Colonic mucosa (tissue), 4 donors: ENCODE measurements at regions of chr12 and their contacts with region 1.

Region 1: DNA sequence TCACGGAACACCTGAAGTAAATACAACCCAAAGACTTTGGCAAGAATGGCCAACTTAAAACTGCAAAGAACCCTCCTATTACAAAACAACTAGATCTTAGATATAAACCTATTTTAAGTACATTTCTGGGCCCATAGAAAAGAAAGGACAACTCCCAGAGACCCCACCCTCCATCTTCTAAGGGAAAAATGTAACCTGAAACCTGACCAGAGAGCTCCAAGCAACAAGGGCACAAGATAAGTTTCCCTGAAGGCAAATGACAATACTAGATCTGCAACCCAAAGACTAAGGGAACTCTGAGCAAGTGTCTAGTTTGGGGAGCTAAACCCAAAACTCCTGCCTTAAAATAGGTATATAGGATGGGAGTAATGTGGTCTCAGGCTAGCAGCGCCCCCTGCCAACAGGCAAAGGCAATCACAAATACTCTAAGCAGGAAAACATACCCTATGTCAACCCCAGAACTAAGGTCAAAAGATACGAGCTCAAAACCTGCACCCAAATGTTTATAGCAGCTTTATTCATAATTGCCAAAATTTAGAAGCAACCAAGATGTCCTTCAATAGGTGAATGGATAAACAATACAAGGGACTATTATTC is 218.9 kb downstream of the ITPR2 start:
- DNase-seq: peak; percentile 25
- H3K4me3 ChIP-seq: no peak overlapping the region
- H3K27ac ChIP-seq: no peak overlapping the region
- H3K4me1 ChIP-seq: no peaks in the 10 kb centered on the region
- H3K27me3 ChIP-seq: no peaks in the 10 kb centered on the region
- CTCF ChIP-seq: peak; percentile 24

Region 2: DNA sequence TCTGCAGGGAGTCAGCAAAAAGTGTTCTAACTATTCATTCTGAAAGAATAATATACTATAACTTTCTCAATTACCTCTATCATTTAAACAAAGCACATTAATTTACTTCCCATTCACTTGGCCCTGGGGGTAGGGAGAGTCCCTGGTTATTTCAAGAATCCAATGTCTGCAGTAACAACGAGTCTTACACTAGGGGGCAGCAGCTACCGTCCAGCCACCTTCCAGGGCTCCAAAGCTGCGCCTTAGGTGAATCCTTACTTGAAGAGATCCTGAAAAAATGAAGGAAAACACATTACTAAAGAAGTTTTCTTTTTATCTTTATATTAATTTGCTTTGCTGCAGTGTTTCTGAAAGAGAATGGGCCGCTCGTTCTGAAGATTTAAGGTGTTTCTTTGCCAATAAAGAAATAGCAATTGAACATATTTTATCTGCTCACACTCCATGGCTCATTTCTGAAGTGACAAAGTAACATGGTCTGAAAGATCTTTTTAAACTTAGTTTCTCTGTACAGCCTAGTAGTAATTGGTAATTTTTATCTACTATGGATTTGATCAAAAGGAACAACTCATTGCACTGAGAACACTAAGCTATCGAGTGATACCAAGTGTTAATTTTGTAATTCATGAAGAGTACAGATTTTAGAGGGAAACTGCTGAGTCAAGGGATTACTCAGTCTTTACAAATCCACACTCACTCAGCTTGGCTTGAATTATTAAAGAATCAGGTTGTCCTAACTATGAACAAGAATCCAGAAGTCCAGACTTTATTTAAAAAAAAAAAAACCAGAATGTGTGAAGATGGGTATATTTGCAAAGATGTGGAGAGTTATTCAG is 516.9 kb before region 1 on chr12:
- intact Hi-C with region 1: loop called (anchors 10 kb)
- DNase-seq: peak; percentile 77
- H3K4me3 ChIP-seq: no peak overlapping the region
- H3K27ac ChIP-seq: no peak overlapping the region
- H3K4me1 ChIP-seq: no peaks in the 10 kb centered on the region
- H3K27me3 ChIP-seq: no peaks in the 10 kb centered on the region
- CTCF ChIP-seq: peak; percentile 96

Region 3: GRCh38 chr12:26340649-26341048 is 273.5 kb before region 1 on chr12:
- intact Hi-C with region 1: no loop called
- DNase-seq: no peak
- H3K4me3 ChIP-seq: no peak overlapping the region
- H3K27ac ChIP-seq: no peak overlapping the region
- H3K4me1 ChIP-seq: no peaks in the 10 kb centered on the region
- H3K27me3 ChIP-seq: no peaks in the 10 kb centered on the region
- CTCF ChIP-seq: no peak

Region 4: GRCh38 chr12:26434299-26435068 is 179.6 kb before region 1 on chr12:
- intact Hi-C with region 1: loop called (anchors 10 kb)
- DNase-seq: peak; percentile 29
- H3K4me3 ChIP-seq: no peak overlapping the region
- H3K27ac ChIP-seq: no peak overlapping the region
- H3K4me1 ChIP-seq: no peaks in the 10 kb centered on the region
- H3K27me3 ChIP-seq: no peaks in the 10 kb centered on the region
- CTCF ChIP-seq: peak; percentile 53

Region 5: GRCh38 chr12:26514364-26514763 is 99.8 kb before region 1 on chr12:
- intact Hi-C with region 1: no loop called
- DNase-seq: no peak
- H3K4me3 ChIP-seq: no peak overlapping the region
- H3K27ac ChIP-seq: no peak overlapping the region
- H3K4me1 ChIP-seq: no peaks in the 10 kb centered on the region
- H3K27me3 ChIP-seq: no peaks in the 10 kb centered on the region
- CTCF ChIP-seq: no peak